Endothelial cell of umbilical vein (primary cell): ENCODE measurements at regions of chr6 and their contacts with region 1.

Region 1: GRCh38 chr6:15621203-15622044 is 41.4 kb downstream of the DTNBP1 start:
- DNase-seq: peak; percentile 20
- H3K4me3 ChIP-seq: no peak overlapping the region
- H3K27ac ChIP-seq: no peak overlapping the region
- H3K4me1 ChIP-seq: no peaks in the 10 kb centered on the region
- H3K27me3 ChIP-seq: no peaks in the 10 kb centered on the region
- CTCF ChIP-seq: no peak
- POLR2A ChIP-seq: no peak

Region 2: GRCh38 chr6:14210663-14211561 is 1410.5 kb before region 1 on chr6:
- CTCF ChIA-PET with region 1: interaction called, 22 read pairs
- POLR2A ChIA-PET with region 1: no interaction called
- dilution Hi-C with region 1: no loop called
- intact Hi-C with region 1: loop called (anchors 1 kb)
- DNase-seq: peak; percentile 88
- H3K4me3 ChIP-seq: peak overlapping the region; percentile 50 to 70 (median 61)
- H3K27ac ChIP-seq: no peak overlapping the region
- H3K4me1 ChIP-seq: no peaks in the 10 kb centered on the region
- H3K27me3 ChIP-seq: peaks cover 0 to 9% of the 10 kb centered on the region in 2 experiments
- CTCF ChIP-seq: peak; percentile 56 to 76
- POLR2A ChIP-seq: no peak

Region 3: DNA sequence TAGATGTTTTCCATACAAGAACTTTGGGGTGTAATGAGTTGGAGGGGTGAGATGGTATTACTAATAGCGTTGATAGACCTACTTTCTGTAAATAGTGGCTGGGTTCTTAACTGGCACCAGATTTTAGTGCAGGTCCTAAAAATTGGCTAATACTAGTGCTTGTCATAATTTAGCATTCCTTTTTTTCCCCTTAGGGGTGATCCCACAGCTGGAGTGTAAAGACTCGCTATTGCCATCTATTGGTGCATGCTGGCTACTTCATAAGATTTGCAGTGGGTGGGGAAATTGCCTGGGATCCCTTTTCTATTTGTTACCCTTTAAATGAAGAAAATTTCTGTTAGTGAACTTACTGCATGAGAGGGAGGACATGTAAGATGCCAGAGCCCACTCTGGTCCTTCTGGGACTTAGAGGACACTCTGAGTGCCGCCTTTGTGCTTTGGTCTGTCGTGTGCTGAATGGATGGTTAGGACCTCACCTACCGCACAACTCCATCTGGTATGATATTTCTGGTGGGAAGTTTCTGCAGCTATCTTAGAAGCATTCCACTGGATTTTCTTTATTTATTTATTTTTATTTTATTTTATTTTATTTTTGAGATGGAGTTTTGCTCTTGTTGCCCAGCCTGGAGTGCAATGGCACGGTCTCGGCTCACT is 180.1 kb before region 1 on chr6:
- CTCF ChIA-PET with region 1: no interaction called
- POLR2A ChIA-PET with region 1: no interaction called
- dilution Hi-C with region 1: no loop called
- intact Hi-C with region 1: loop called (anchors 2 kb)
- DNase-seq: peak; percentile 63
- H3K4me3 ChIP-seq: no peak overlapping the region
- H3K27ac ChIP-seq: no peak overlapping the region
- H3K4me1 ChIP-seq: peaks cover 5% of the 10 kb centered on the region
- H3K27me3 ChIP-seq: no peaks in the 10 kb centered on the region
- CTCF ChIP-seq: peak; percentile 73 to 75
- POLR2A ChIP-seq: no peak

Region 4: DNA sequence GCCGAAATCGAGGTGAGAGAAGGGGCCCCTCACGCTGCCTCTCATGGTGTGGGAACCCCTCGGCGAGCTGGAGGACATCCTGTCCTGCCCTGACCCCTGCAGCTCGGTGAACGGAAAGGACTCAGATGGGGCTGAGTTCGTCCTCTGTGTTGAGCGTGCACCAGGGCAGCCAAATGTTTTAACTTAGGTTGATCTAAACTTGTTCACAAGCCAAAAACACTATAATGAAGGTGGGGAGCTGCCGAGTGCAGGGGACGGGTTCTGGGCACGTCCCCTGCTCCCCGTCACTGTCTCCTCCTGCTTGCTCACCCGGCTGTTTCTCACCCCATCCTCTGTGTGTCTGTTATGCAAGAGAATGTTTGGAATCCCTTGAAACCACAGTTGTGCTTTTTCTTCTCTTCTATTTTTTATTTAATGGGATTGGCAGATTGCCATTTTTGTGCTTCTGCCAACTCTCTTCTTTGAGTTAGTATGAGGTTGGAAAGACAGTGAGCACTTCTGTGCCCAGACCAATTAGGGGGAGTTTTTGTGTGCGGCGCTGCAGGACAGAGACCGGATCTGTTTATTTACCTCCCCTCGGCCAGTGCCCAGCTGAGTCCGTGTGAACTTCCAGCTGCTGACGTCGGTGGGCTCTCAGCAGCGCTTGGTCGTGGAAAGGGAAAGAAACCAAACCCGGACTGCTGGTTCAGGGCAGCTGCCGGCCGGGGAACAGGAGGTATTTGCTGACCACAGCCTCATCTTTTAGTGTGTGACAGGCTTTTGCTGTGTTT is 116.7 kb before region 1 on chr6:
- CTCF ChIA-PET with region 1: interaction called, 5 read pairs
- POLR2A ChIA-PET with region 1: no interaction called
- dilution Hi-C with region 1: no loop called
- intact Hi-C with region 1: loop called (anchors 2 kb)
- DNase-seq: peak; percentile 91
- H3K4me3 ChIP-seq: peak overlapping the region in 1 of 3 experiments; percentile 1
- H3K27ac ChIP-seq: no peak overlapping the region
- H3K4me1 ChIP-seq: peaks cover 11% of the 10 kb centered on the region
- H3K27me3 ChIP-seq: no peaks in the 10 kb centered on the region
- CTCF ChIP-seq: no peak
- POLR2A ChIP-seq: no peak

Region 5: GRCh38 chr6:15569035-15569995 is 52.1 kb before region 1 on chr6:
- CTCF ChIA-PET with region 1: no interaction called
- POLR2A ChIA-PET with region 1: no interaction called
- dilution Hi-C with region 1: no loop called
- intact Hi-C with region 1: no loop called
- DNase-seq: no peak
- H3K4me3 ChIP-seq: no peak overlapping the region
- H3K27ac ChIP-seq: no peak overlapping the region
- H3K4me1 ChIP-seq: no peaks in the 10 kb centered on the region
- H3K27me3 ChIP-seq: no peaks in the 10 kb centered on the region
- CTCF ChIP-seq: no peak
- POLR2A ChIP-seq: no peak

Region 6: GRCh38 chr6:15608396-15608795 is 13.0 kb before region 1 on chr6:
- CTCF ChIA-PET with region 1: interaction called, 10 read pairs
- POLR2A ChIA-PET with region 1: no interaction called
- dilution Hi-C with region 1: no loop called
- intact Hi-C with region 1: no loop called
- DNase-seq: peak; percentile 69
- H3K4me3 ChIP-seq: peak overlapping the region in 1 of 3 experiments; percentile 27
- H3K27ac ChIP-seq: peak overlapping the region; percentile 59
- H3K4me1 ChIP-seq: peaks cover 13% of the 10 kb centered on the region
- H3K27me3 ChIP-seq: no peaks in the 10 kb centered on the region
- CTCF ChIP-seq: no peak
- POLR2A ChIP-seq: no peak

Region 7: GRCh38 chr6:15662326-15663129 is 41.1 kb after region 1 on chr6 and contains the start of gene DTNBP1:
- CTCF ChIA-PET with region 1: no interaction called
- POLR2A ChIA-PET with region 1: no interaction called
- dilution Hi-C with region 1: no loop called
- intact Hi-C with region 1: no loop called
- DNase-seq: peak; percentile 79
- H3K4me3 ChIP-seq: peak within 1 kb of the TSS; percentile 62 to 78 (median 71)
- H3K27ac ChIP-seq: peak within 1 kb of the TSS; percentile 3
- H3K4me1 ChIP-seq: peaks cover 6% of the 10 kb centered on the region
- H3K27me3 ChIP-seq: peaks cover 3 to 7% of the 10 kb centered on the region in 2 experiments
- CTCF ChIP-seq: no peak
- POLR2A ChIP-seq: peak; percentile 42
- total RNA-seq, gene DTNBP1: 21.8 and 24.3 TPM in 2 replicates

Region 8: DNA sequence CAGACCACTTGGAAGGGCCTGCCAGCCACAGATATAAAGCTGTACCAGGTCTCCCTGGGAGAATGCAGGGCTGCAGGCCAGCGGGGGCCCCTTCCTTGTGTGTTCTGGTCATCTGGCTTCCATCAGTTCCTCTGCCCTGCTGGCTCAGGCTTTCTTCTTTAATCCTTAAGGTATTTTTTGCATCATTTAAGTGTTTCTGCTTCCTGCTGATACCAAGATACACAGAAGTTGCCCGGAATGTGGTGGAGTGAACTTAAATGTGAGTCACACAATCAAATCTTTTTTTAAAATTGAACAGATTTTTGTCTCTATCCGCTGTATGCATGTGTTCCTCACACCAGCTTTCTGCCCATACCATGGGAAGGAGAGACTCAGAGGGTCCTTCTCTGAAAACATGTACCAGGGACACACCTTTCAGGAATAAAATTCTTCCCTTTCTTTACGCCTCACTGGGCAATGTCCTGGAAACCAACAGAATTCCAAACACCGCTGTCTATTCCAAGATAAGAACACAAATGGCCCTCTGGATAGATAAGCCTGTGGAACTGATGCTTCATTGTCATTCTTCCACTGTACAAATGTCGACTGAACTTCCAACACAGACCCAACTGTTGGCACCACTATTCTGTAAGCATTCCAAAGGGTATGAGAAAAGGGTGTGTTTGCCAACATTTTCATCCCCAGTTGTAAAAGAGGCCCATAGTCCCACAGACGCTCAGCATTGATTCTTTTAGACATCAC is 301.3 kb after region 1 on chr6:
- CTCF ChIA-PET with region 1: no interaction called
- POLR2A ChIA-PET with region 1: no interaction called
- dilution Hi-C with region 1: no loop called
- intact Hi-C with region 1: no loop called
- DNase-seq: peak; percentile 99
- H3K4me3 ChIP-seq: no peak overlapping the region
- H3K27ac ChIP-seq: peak overlapping the region; percentile 86
- H3K4me1 ChIP-seq: peaks cover 23% of the 10 kb centered on the region
- H3K27me3 ChIP-seq: no peaks in the 10 kb centered on the region
- CTCF ChIP-seq: no peak
- POLR2A ChIP-seq: peak; percentile 76